ENCODE measurements at regions of chr3 and their contacts with region 1.

Region 1: DNA sequence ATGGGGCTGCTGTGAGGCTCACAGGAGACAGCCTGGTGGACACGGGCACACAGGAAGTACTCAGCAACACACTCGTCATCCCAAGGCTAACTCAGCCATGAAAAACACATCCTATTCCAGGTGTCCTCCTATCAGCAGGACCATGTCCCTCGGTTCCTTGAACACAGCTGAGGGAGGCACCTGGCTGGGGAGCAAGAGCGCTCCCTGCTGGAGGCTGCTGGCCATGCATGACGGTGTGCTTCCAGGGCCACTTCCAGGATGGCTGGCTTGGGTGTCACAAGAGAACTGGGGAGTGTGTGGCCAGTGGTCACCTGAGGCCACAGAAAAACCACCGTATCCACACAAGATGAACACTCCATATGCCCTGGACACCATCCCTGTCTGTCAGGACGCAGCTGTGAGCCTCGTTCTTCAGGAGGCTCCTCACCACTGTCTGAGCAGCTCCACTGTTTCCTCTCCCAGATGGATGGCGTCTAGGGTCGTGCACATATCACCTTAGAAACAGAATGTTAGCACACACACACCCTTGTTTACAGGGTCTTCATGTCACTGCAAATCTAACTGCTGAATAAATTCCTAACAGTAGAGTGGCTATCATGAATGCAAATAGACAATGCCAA is 31.0 kb downstream of the POC1A start:
- DNase-seq: peak; percentile 64 to 80 (median 69)
- H3K4me3 ChIP-seq: no peak overlapping the region
- H3K4me3 Mint-ChIP-seq: no peak overlapping the region
- H3K27ac ChIP-seq: no peak overlapping the region
- H3K27ac Mint-ChIP-seq: peak overlapping the region in 1 of 8 donors; percentile 17
- H3K4me1 ChIP-seq: no peaks in the 10 kb centered on the region
- H3K4me1 Mint-ChIP-seq: no peaks in the 10 kb centered on the region
- H3K27me3 ChIP-seq: no peaks in the 10 kb centered on the region
- H3K27me3 Mint-ChIP-seq: no peaks in the 10 kb centered on the region

Region 2: DNA sequence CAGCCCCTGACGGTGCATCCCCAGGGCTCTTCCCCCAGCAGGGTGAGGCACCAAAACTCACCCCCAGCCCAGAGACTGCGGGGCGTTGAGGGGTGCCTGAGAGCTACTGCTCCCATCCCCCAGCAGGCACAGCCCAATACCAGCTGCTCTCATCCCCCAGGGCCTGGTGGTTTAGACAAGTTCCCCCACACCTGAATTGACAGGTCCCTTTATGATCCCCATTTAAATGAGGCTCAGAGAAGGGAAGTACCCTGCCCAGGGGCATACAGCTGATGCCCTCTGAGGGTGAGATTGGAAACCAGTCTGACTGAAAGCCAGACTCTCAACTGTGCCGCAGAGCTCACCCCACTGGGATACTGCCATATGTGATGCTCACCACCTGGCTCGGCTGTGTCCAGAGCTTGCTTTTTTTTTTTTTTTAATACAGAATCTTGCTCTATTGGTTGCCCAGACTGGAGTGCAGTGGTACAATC is 87.0 kb before region 1 on chr3:
- CTCF ChIA-PET with region 1: interaction called, 16 read pairs
- POLR2A ChIA-PET with region 1: interaction called, 3 read pairs
- DNase-seq: no peak
- H3K4me3 ChIP-seq: no peak overlapping the region
- H3K4me3 Mint-ChIP-seq: no peak overlapping the region
- H3K27ac ChIP-seq: no peak overlapping the region
- H3K27ac Mint-ChIP-seq: peak overlapping the region in 1 of 8 donors; percentile 12
- H3K4me1 ChIP-seq: no peaks in the 10 kb centered on the region
- H3K4me1 Mint-ChIP-seq: peaks cover 0 to 1% (median 1%) of the 10 kb centered on the region in 3 donors
- H3K27me3 ChIP-seq: no peaks in the 10 kb centered on the region
- H3K27me3 Mint-ChIP-seq: no peaks in the 10 kb centered on the region

Region 3: DNA sequence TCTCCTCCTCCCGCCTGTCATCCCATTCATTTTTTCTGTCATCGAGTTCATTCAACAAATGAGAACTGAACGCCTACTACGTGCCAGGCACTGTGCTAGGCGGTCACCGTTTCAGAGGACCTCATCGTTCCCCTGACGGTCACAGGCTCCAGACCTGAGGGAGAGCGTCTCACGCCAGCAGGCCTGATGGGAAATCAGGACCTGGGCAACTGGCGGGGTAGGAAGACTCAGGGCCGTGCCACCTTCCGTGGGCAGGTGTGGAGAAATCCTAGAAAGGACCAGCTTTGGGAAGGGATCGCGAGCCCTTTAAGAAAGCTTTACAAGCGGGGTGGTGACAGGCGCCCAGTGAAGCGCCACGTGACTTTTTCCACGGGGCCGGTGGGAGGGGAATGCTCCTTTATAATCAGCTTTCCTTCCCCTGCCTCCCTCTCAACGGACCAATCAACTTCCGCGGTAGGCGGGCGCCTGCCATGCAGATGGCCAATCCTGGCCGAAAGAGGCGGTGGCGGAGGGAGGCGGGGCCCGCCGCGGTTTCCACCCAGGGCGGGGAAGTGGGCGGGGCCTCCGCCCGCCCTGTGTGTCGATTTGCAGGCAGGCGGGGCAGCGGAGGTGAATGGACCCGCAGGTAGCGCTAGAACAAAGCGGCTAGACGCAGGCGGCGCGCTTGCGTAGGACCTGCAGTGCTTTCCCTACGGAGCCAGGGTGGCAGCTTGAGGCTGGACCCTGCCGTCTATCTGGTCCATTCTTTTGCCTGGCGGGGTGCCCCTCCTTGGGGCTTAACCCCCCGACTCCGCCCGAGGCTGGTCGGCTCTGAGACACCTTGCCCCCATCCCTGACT is 66.0 kb before region 1 on chr3:
- CTCF ChIA-PET with region 1: interaction called, 12 read pairs
- POLR2A ChIA-PET with region 1: no interaction called
- DNase-seq: peak; percentile 98 to 100 (median 99)
- H3K4me3 ChIP-seq: peak overlapping the region; percentile 99
- H3K4me3 Mint-ChIP-seq: peak overlapping the region; percentile 91 to 95 (median 92)
- H3K27ac ChIP-seq: peak overlapping the region; percentile 78
- H3K27ac Mint-ChIP-seq: peak overlapping the region; percentile 94 to 96 (median 94)
- H3K4me1 ChIP-seq: peaks cover 32% of the 10 kb centered on the region
- H3K4me1 Mint-ChIP-seq: peaks cover 26 to 40% (median 34%) of the 10 kb centered on the region in 3 donors
- H3K27me3 ChIP-seq: no peaks in the 10 kb centered on the region
- H3K27me3 Mint-ChIP-seq: no peaks in the 10 kb centered on the region

Region 4: GRCh38 chr3:52532838-52533622 is 409.8 kb after region 1 on chr3:
- CTCF ChIA-PET with region 1: no interaction called
- POLR2A ChIA-PET with region 1: no interaction called
- DNase-seq: peak in 3 of 5 donors; percentile 20 to 27 (median 26)
- H3K4me3 ChIP-seq: peak overlapping the region; percentile 20
- H3K4me3 Mint-ChIP-seq: peak overlapping the region; percentile 64 to 89 (median 71)
- H3K27ac ChIP-seq: no peak overlapping the region
- H3K27ac Mint-ChIP-seq: peak overlapping the region in 6 of 8 donors; percentile 36 to 96 (median 80)
- H3K4me1 ChIP-seq: peaks cover 17% of the 10 kb centered on the region
- H3K4me1 Mint-ChIP-seq: peaks cover 29 to 45% (median 32%) of the 10 kb centered on the region in 3 donors
- H3K27me3 ChIP-seq: no peaks in the 10 kb centered on the region
- H3K27me3 Mint-ChIP-seq: peaks cover 0 to 4% of the 10 kb centered on the region in 2 donors

Measured in CD8-positive, alpha-beta memory T cell (primary cell).